MCF 10A (cell line): ENCODE measurements at regions of chr9 and their contacts with region 1.

Region 1: GRCh38 chr9:109469646-109470358 is 28.3 kb downstream of the PTPN3 start:
- DNase-seq: peak; percentile 88
- H3K4me3 Mint-ChIP-seq: no peak overlapping the region
- H3K27ac Mint-ChIP-seq: peak overlapping the region; percentile 67
- H3K4me1 Mint-ChIP-seq: peaks cover 49% of the 10 kb centered on the region
- H3K27me3 Mint-ChIP-seq: no peaks in the 10 kb centered on the region
- CTCF ChIP-seq: peak; percentile 91

Region 2: DNA sequence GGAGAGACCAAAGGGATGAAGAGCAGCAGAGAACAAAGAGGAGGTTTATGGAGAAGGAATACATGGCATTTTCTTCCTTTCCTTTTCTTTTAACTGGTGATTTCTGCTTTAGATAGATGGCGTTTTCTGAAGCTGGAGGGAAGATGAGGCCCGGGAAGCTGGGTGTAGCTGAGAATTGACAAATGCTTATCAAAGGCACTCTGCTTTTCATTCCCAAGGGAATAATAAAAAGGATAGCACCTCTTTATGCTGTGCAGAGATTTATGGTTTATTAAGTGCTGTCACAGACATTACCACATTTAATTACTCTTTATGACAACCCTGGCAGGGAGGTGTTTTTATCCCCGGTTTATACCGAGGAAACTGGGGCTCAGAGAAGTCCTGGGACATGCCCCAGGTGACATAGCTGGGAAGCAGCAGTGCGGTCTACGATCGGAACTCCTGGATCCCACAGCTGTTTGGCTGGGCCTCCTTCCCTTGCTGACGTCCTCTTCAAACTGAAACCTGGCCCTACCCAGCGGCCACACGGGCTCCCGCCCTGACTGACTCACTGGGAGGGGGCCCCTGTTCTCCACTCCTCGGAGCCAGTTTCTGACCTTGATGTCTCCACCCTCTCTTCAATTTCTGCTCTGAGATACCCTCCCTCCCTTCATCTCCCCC is 140.7 kb before region 1 on chr9:
- CTCF ChIA-PET with region 1: interaction called, 10 read pairs
- POLR2A ChIA-PET with region 1: interaction called, 3 read pairs
- intact Hi-C with region 1: loop called (anchors 5 kb)
- DNase-seq: peak; percentile 90
- H3K4me3 Mint-ChIP-seq: peak overlapping the region; percentile 52
- H3K27ac Mint-ChIP-seq: peak overlapping the region; percentile 92
- H3K4me1 Mint-ChIP-seq: peaks cover 66% of the 10 kb centered on the region
- H3K27me3 Mint-ChIP-seq: no peaks in the 10 kb centered on the region
- CTCF ChIP-seq: no peak

Region 3: GRCh38 chr9:109428854-109429253 is 40.9 kb before region 1 on chr9:
- CTCF ChIA-PET with region 1: interaction called, 27 read pairs
- POLR2A ChIA-PET with region 1: interaction called, 4 read pairs
- intact Hi-C with region 1: no loop called
- DNase-seq: no peak
- H3K4me3 Mint-ChIP-seq: no peak overlapping the region
- H3K27ac Mint-ChIP-seq: no peak overlapping the region
- H3K4me1 Mint-ChIP-seq: no peaks in the 10 kb centered on the region
- H3K27me3 Mint-ChIP-seq: no peaks in the 10 kb centered on the region
- CTCF ChIP-seq: no peak

Region 4: GRCh38 chr9:109482391-109482916 is 12.7 kb after region 1 on chr9:
- CTCF ChIA-PET with region 1: interaction called, 13 read pairs
- POLR2A ChIA-PET with region 1: interaction called, 3 read pairs
- intact Hi-C with region 1: no loop called
- DNase-seq: no peak
- H3K4me3 Mint-ChIP-seq: no peak overlapping the region
- H3K27ac Mint-ChIP-seq: peak overlapping the region; percentile 13
- H3K4me1 Mint-ChIP-seq: peaks cover 26% of the 10 kb centered on the region
- H3K27me3 Mint-ChIP-seq: no peaks in the 10 kb centered on the region
- CTCF ChIP-seq: no peak

Region 5: DNA sequence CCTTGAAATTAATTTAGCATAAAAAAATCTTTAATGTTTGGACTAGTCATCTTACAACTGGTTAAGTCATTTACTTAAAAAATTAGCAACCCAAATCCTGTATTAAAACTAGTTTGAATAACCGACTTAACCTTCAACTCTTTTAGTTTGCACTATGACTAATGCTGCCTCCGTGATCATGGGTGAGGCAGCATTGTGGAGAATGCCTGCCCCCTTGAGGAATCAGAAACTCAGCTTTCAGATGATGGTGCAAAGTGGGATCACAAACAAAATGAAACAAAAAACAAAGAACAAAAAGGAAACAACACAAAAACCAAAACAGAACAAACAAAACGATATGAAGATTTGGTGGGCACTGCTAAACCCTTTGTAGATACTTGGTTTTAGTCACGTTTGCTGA is 183.2 kb after region 1 on chr9:
- CTCF ChIA-PET with region 1: interaction called, 3 read pairs
- POLR2A ChIA-PET with region 1: no interaction called
- intact Hi-C with region 1: loop called (anchors 5 kb)
- DNase-seq: peak; percentile 63
- H3K4me3 Mint-ChIP-seq: no peak overlapping the region
- H3K27ac Mint-ChIP-seq: no peak overlapping the region
- H3K4me1 Mint-ChIP-seq: peaks cover 6% of the 10 kb centered on the region
- H3K27me3 Mint-ChIP-seq: no peaks in the 10 kb centered on the region
- CTCF ChIP-seq: peak; percentile 36